ENCODE measurements at regions of chr21 and their contacts with region 1.

Region 1: DNA sequence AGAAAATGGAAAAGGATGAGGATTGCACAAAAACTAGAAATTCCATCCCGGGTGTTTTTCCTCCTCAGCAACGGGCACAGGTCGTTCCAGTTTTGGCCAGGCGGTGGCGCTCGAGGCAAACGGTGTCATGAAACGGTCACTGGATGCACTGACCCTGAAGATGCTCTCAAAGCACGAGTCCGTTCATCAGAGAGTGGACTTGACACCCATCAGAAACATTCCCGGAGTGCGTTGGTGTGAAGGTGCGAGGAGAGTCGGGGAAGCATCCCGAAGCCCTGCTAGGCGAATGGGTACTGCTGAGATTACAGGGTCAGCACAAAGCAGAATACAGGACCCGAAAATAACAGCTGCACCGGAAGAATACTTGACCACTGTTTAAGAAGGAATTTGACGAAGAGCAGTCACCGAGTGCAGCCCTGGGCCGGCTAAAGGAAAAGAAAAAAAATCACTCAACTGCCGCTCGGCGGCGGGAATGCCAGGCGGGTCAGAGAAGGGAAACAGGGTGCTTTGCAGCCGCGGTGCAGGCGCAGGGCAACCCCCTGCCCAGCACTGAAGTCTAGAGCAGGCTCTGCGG is 71.7 kb upstream of the ETS2 start:
- DNase-seq: peak; percentile 91
- H3K4me3 ChIP-seq: peak overlapping the region; percentile 56
- H3K27ac ChIP-seq: peak overlapping the region; percentile 80
- H3K4me1 ChIP-seq: peaks cover 11% of the 10 kb centered on the region
- H3K27me3 ChIP-seq: peaks cover 5% of the 10 kb centered on the region
- CTCF ChIP-seq: peak; percentile 97

Region 2: DNA sequence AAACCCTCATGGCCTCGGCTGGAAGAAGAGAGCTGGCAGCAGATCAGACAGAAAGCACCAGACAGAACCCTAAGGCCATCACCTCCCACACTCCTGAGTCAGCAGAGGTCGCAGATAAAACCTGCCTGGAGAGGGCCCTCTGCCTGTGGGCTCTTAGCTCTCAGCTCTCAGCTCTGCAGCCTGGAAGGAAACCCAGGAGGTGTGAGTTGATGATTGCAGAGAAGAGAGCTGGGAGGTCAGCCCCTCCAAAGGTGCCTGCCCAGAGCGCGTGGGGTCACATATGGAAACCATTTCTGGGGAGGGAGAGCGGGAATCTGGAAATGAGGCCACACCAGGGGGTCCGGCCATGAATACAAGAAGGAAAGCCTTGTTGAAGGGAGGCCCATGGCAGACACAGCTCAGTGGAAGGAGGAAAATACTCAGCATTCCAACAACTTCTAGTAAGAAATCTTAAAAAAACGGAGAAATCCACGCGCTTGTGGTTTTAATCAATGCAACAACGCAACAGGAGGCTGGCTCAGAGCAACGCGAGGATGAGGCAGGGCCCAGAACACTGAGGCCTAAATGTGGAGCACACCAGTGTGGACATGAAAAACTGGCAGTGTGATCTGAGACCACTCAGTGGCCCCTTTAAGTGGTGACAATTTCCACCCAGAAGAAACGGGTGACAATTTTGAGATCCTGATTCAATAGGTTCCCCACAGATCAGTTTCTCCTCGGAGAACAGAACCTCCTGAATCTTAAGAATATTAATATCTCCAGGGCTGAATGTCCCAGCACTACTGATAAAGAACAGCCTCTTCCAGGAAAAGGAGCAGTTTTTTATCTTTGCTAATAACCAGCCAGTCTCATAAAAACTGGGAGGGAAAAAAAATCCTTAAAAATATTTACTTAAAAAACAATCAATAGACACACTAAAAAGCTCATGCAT is 403.5 kb after region 1 on chr21:
- intact Hi-C with region 1: loop called (anchors 2 kb)
- DNase-seq: no peak
- H3K4me3 ChIP-seq: no peak overlapping the region
- H3K27ac ChIP-seq: peak overlapping the region; percentile 48
- H3K4me1 ChIP-seq: peaks cover 8% of the 10 kb centered on the region
- H3K27me3 ChIP-seq: no peaks in the 10 kb centered on the region
- CTCF ChIP-seq: no peak